Dendritic cell treated with granulocyte-macrophage colony-stimulating factor and Interleukin-4, amounts not matched to agents 40 ng/mL and 50 ng/mL, for 4 days (primary cell): ENCODE measurements at regions of chr22 and their contacts with region 1.

Region 1: DNA sequence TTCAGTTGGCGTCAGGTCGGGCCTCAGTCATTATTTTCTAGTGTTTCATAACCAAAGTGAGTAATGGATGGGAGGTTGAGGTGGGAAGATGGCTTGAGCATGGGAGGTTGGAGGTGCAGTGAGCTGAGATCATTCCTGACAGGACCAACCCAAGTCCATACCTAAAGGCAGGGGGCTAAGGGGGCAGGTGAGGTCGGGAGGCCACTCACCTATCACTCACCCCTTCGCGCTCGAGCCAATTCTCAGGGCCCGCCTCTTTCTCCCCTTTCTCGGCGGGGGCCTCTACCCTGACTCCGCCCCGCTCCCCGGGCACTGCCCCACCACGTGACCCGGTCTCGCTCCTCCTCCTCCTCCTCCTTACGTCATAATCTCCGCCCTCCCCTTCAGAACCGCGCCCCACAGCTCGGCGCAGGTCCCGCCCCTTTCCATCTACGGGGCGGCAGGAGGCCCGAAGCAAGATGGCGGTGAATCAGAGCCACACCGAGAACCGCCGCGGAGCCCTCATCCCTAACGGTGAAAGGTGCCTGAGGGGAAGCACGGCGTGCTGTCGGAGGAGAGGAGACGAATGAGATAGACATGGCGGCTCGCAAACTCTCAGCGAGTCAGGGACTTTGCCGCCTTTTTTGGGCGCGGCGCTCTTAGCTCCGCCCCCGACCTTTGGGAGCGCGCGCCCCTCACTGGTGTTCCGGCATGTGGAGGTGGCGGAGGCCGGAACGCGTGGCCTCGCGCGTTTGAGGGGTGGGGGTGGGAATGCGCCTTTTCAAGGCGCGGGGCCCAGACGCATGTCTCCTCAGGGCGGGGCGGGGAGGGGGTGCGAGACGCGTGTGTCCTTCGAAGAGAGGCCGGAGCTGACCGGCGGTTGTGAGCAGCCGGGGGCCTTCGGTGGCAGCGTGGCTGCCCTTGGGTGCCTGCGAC is at the start of gene WBP2NL:
- H3K4me3 Mint-ChIP-seq: peak within 1 kb of the TSS; percentile 92
- H3K27ac Mint-ChIP-seq: peak within 1 kb of the TSS; percentile 93
- H3K4me1 Mint-ChIP-seq: peaks cover 54% of the 10 kb centered on the region
- H3K27me3 Mint-ChIP-seq: peaks cover 28% of the 10 kb centered on the region

Region 2: DNA sequence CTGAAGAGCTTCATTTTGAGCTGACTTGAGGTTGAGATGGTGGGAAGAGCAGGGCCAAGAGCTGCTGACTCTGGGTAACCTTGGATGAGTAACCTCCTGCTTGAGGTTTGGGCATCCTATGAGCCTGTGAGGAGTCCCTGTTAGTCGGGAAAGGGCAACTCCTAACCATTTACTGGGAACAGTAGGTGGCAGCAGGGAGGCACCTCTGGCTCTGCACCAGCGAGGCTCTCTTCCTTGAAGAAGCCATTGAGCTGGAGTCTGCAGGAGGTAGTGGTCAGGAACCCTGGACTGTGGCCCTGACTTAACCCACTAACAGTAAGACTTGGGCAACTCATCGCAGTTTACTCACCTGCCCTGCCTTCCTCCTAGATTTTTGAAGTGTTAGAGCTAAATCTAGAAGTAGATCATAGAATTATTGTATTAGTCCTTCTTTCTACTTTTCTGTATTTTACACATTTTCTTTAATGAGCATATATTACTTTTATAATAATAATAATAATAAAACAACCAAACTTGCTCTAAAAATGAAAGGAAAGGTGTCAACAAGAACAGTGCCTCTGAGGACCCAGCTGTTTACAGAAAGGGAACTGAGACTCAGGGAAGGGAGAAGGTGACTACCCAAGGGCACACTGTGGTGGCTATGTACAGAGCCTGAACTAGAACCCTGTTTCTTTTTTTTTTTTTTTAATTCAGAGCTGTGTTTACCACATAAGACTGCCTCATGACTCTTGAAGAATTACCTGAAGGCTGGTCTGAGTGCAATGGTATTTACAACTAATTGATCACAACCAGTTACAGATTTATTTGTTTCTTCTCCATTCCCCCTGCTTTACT is 251.8 kb before region 1 on chr22:
- intact Hi-C with region 1: no loop called
- H3K4me3 Mint-ChIP-seq: no peak overlapping the region
- H3K27ac Mint-ChIP-seq: no peak overlapping the region
- H3K4me1 Mint-ChIP-seq: peaks cover 7% of the 10 kb centered on the region
- H3K27me3 Mint-ChIP-seq: peaks cover 27% of the 10 kb centered on the region

Region 3: GRCh38 chr22:42052765-42053164 is 54.1 kb after region 1 on chr22:
- intact Hi-C with region 1: loop called (anchors 10 kb)
- H3K4me3 Mint-ChIP-seq: no peak overlapping the region
- H3K27ac Mint-ChIP-seq: peak overlapping the region; percentile 16
- H3K4me1 Mint-ChIP-seq: peaks cover 21% of the 10 kb centered on the region
- H3K27me3 Mint-ChIP-seq: no peaks in the 10 kb centered on the region

Region 4: DNA sequence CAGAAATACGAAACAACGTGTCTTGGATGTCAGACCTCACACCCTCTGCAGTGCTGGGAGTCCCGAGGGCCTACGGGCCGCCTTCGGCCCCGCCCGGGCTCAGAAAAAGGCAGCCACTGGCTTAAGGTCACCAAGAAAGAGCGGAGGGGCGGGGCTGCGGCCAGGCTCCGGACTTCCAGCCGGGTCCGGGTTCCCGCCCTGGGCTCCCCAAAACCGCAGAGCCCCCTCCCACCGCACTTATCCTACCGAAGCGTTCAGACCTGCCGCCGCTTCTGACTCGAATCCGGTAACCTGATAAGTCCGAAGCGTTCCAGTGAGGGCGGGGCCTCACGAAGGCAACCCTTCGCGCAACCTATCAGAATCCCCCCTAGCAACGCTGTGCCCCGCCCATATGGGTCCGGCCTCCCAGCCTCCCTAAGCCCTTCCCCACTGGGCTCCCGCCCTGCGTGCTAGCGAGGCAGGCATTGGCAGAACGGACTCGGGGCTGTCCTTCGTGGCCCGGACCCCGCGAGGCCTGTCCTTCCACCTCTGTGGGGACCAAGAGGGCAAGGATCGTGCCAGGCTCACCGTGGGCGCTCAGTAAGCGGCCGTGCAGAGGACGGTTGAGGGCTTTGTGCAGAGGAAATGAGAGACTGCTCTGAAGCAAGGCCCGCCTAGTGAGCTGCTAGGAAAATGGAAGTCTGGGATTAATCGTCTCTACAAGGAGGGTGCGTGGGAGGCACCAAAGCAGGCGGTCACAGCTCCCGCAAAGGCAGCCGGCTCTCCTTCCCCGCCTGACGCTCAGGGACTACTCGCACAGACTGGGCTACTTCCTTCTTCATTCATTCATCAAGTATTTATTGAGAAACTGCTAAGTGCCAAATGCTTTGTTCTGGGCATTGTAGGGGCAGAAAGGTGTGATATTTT is 72.2 kb after region 1 on chr22 and contains the start of gene NAGA:
- intact Hi-C with region 1: loop called (anchors 1 kb)
- H3K4me3 Mint-ChIP-seq: peak within 1 kb of the TSS; percentile 82
- H3K27ac Mint-ChIP-seq: peak within 1 kb of the TSS; percentile 96
- H3K4me1 Mint-ChIP-seq: peaks cover 76% of the 10 kb centered on the region
- H3K27me3 Mint-ChIP-seq: no peaks in the 10 kb centered on the region